Right lobe of liver (tissue), 6 donors: ENCODE measurements at regions of chr6 and their contacts with region 1.

Region 1: DNA sequence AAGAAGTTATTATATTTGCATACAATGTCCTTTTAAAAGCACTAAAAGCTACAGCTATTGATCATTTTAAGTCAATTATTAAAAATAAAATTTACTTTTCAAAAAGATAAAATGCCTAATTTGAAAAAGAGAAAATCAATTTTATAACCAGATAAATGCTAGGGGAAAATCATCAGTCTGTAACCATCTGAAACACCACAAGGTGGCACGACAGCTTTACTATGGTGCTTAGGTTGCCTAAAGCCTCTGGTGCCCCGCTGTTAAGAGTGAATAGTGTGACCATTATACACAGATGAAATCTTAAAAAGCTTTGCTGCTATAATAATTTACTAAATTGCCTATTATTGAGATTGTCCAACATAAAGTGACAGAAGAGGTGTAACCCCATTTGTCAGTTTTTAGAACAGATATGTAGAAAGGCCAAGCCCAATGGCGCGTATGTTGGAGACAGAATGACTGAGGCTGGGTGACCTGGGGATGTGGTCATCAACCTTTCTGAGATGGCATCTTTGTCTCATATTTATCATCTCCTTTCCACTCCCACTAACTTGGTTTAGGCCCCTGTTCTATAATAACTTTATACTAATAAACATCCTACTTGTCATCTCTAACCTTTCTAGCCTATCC is 100.8 kb downstream of the MOXD1 start:
- DNase-seq: peak in 1 of 3 donors; percentile 51
- ATAC-seq: peak; percentile 81 to 92 (median 88)
- H3K4me3 ChIP-seq: no peak overlapping the region
- H3K27ac ChIP-seq: no peak overlapping the region
- H3K4me1 ChIP-seq: no peaks in the 10 kb centered on the region
- H3K27me3 ChIP-seq: no peaks in the 10 kb centered on the region
- CTCF ChIP-seq: peak; percentile 61 to 89 (median 72)
- POLR2A ChIP-seq: no peak

Region 2: GRCh38 chr6:131995917-131996316 is 304.5 kb before region 1 on chr6:
- intact Hi-C with region 1: no loop called
- DNase-seq: no peak
- ATAC-seq: peak in 1 of 4 donors; percentile 26
- H3K4me3 ChIP-seq: no peak overlapping the region
- H3K27ac ChIP-seq: no peak overlapping the region
- H3K4me1 ChIP-seq: peaks cover 0 to 11% (median 0%) of the 10 kb centered on the region in 4 donors
- H3K27me3 ChIP-seq: no peaks in the 10 kb centered on the region
- CTCF ChIP-seq: no peak
- POLR2A ChIP-seq: no peak

Region 3: DNA sequence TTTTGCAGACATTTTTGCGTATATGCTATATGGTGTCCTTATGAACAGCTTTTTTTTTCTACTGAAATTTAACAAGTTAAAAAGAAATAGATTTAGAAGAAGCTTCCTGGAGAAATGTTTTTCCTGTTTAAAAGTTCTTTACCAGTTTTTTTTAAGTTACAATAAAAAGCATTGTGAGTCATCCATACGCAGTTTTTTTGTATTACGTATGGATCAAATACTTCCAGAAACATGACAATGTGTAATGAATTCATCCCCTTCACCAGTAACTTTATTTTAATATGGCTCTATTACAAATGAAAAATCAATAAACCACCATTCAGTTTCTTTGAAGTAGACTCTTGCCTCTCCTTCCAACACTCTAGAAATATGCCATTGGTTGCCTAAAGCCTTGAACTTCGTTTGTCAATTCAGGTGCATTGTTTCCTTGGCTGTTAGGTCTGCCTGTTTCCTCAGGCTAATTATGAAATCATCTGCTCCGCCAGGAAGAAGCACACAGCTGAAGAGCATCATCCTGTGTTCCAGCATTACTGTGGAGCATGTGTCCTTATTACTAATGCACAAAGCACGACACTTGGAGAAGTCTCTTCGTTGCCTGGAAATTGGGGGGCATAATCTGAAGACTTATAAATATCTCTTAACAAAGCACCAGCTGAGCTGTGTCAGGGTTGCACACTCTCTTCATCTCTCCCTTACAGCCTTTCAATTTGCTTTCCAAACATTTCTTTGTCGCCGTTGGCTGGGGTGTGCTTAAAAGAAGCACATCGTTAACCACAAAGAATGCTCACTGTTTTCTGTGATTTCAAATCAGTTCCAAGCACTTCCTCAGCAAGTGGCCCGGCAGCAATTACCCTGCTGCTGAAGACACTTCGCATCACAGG is 91.2 kb after region 1 on chr6:
- intact Hi-C with region 1: loop called in 1 of 2 experiments (anchors 10 kb)
- DNase-seq: no peak
- ATAC-seq: no peak
- H3K4me3 ChIP-seq: no peak overlapping the region
- H3K27ac ChIP-seq: no peak overlapping the region
- H3K4me1 ChIP-seq: no peaks in the 10 kb centered on the region
- H3K27me3 ChIP-seq: no peaks in the 10 kb centered on the region
- CTCF ChIP-seq: no peak
- POLR2A ChIP-seq: no peak

Region 4: GRCh38 chr6:132401120-132401945 is 100.9 kb after region 1 on chr6 and contains the start of gene MOXD1:
- intact Hi-C with region 1: loop called (anchors 10 kb)
- DNase-seq: peak; percentile 45 to 58 (median 55)
- ATAC-seq: peak; percentile 81 to 89 (median 84)
- H3K4me3 ChIP-seq: peak within 1 kb of the TSS; percentile 47 to 51 (median 47)
- H3K27ac ChIP-seq: no peak within 1 kb of the TSS
- H3K4me1 ChIP-seq: peaks cover 0 to 6% (median 0%) of the 10 kb centered on the region in 4 donors
- H3K27me3 ChIP-seq: peaks cover 0 to 28% of the 10 kb centered on the region in 2 donors
- CTCF ChIP-seq: no peak
- POLR2A ChIP-seq: no peak
- total RNA-seq, gene MOXD1: 0.24 to 2.3 (median 1.0) TPM in 5 of 6 experiments, not detected in the other